Dorsolateral prefrontal cortex (tissue), 120 donors: ENCODE measurements at regions of chr3 and their contacts with region 1.

Region 1: DNA sequence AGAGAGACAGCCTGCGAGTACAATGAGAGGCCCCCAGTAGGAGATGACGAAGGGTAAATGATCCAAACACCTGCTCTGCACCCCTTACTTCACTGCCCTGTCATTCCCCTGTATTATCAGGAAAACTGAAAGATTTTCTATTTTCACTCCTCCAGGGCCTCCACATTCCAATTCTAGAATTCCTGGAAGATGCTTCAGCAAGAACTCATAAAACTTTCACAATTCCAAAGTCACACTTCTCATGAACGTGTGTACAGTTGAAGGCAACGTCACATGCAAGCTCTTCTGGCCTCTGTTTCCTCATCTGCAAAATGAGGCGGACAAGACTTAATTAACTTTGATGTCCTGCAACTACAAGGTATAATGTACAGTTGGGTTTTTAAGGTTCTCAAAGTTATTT is 62.8 kb upstream of the SPATA12 start:
- DNase-seq: no peak
- H3K4me3 ChIP-seq: no peak overlapping the region
- H3K27ac ChIP-seq: peak overlapping the region in 39 of 59 donors; percentile 9 to 90 (median 72)
- H3K27me3 ChIP-seq: no peaks in the 10 kb centered on the region
- CTCF ChIP-seq: peak in 1 of 56 donors; percentile 7

Region 2: GRCh38 chr3:57017459-57017845 is 19.8 kb after region 1 on chr3:
- intact Hi-C with region 1: loop called in 1 of 2 experiments (anchors 2 kb)
- DNase-seq: peak in 9 of 10 donors; percentile 60 to 90 (median 86)
- H3K4me3 ChIP-seq: peak overlapping the region in 33 of 59 donors; percentile 0 to 51 (median 20)
- H3K27ac ChIP-seq: peak overlapping the region in 57 of 59 donors; percentile 40 to 97 (median 79)
- H3K27me3 ChIP-seq: no peaks in the 10 kb centered on the region
- CTCF ChIP-seq: peak in 10 of 56 donors; percentile 9 to 34 (median 15)

Region 3: GRCh38 chr3:57078344-57078634 is 80.6 kb after region 1 on chr3:
- intact Hi-C with region 1: loop called in 1 of 2 experiments (anchors 5 kb)
- DNase-seq: peak in 6 of 10 donors; percentile 11 to 48 (median 39)
- H3K4me3 ChIP-seq: peak overlapping the region; percentile 41 to 85 (median 70)
- H3K27ac ChIP-seq: peak overlapping the region in 14 of 59 donors; percentile 9 to 68 (median 36)
- H3K27me3 ChIP-seq: peaks cover 0 to 26% (median 3%) of the 10 kb centered on the region in 45 donors
- CTCF ChIP-seq: no peak

Region 4: GRCh38 chr3:57100046-57100695 is 102.5 kb after region 1 on chr3:
- intact Hi-C with region 1: loop called in 1 of 2 experiments (anchors 5 kb)
- DNase-seq: peak in 8 of 10 donors; percentile 50 to 80 (median 68)
- H3K4me3 ChIP-seq: no peak overlapping the region
- H3K27ac ChIP-seq: no peak overlapping the region
- H3K27me3 ChIP-seq: no peaks in the 10 kb centered on the region
- CTCF ChIP-seq: peak; percentile 80 to 98 (median 92)

Region 5: GRCh38 chr3:57221883-57222282 is 224.2 kb after region 1 on chr3:
- intact Hi-C with region 1: loop called (anchors 5 kb)
- DNase-seq: no peak
- H3K4me3 ChIP-seq: no peak overlapping the region
- H3K27ac ChIP-seq: no peak overlapping the region
- H3K27me3 ChIP-seq: no peaks in the 10 kb centered on the region
- CTCF ChIP-seq: peak in 43 of 56 donors; percentile 7 to 63 (median 34)